Activated naive CD4-positive, alpha-beta T cell treated with anti-CD3 and anti-CD28 coated beads for 36 hours (primary cell): ENCODE measurements at regions of chr9 and their contacts with region 1.

Region 1: DNA sequence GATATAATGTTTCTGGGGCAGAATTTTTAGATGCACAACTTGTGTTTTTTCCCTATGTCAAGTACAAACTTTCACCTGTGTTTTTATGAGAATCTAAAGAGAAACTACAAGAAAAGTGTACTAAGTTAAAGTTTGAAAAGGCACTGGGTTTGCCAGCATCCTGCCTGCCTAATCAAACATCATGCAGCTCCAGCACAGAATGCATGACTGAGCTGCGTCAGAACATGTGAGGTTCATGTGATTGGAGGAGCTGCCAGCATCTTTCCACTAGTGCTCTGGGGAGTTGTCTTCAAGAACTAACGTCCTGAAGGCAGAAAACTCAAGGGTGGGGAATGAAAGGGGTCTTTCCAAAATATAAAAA is 46.1 kb upstream of the RIC1 start:
- DNase-seq: peak; percentile 72
- H3K4me3 Mint-ChIP-seq: peak overlapping the region; percentile 27
- H3K27ac Mint-ChIP-seq: peak overlapping the region; percentile 78
- H3K4me1 Mint-ChIP-seq: peaks cover 66% of the 10 kb centered on the region
- H3K27me3 Mint-ChIP-seq: no peaks in the 10 kb centered on the region

Region 2: GRCh38 chr9:4740638-4741364 is 842.0 kb before region 1 on chr9 and contains the start of gene AK3:
- CTCF ChIA-PET with region 1: no interaction called
- intact Hi-C with region 1: loop called (anchors 10 kb)
- DNase-seq: peak; percentile 90
- H3K4me3 Mint-ChIP-seq: peak within 1 kb of the TSS; percentile 91
- H3K27ac Mint-ChIP-seq: peak within 1 kb of the TSS; percentile 89
- H3K4me1 Mint-ChIP-seq: peaks cover 55% of the 10 kb centered on the region
- H3K27me3 Mint-ChIP-seq: no peaks in the 10 kb centered on the region
- total RNA-seq, gene AK3: 50.2 to 50.9 TPM

Region 3: GRCh38 chr9:4970970-4971641 is 611.7 kb before region 1 on chr9:
- CTCF ChIA-PET with region 1: no interaction called
- intact Hi-C with region 1: loop called (anchors 1 kb)
- DNase-seq: peak; percentile 91
- H3K4me3 Mint-ChIP-seq: no peak overlapping the region
- H3K27ac Mint-ChIP-seq: no peak overlapping the region
- H3K4me1 Mint-ChIP-seq: peaks cover 23% of the 10 kb centered on the region
- H3K27me3 Mint-ChIP-seq: no peaks in the 10 kb centered on the region

Region 4: DNA sequence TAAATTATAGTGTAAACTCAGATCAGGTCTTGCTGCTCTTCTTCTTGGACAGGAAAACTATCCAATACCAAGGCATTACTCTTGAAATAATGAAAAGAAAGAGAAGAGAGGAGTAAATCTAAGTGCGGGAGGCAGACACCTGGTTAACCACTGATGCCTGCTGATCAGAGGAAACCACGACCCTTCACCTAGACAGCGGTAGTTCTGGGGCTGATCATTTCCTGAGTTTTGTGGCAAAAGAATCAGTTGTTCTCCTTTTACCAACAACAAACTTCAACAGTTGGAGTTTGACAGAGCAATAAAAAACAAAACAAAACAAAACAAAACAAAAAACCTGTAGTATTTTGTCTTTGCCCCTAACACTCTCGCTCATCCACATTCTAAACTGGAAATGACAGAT is 246.1 kb before region 1 on chr9:
- CTCF ChIA-PET with region 1: no interaction called
- intact Hi-C with region 1: no loop called
- DNase-seq: peak; percentile 42
- H3K4me3 Mint-ChIP-seq: peak overlapping the region; percentile 57
- H3K27ac Mint-ChIP-seq: no peak overlapping the region
- H3K4me1 Mint-ChIP-seq: peaks cover 39% of the 10 kb centered on the region
- H3K27me3 Mint-ChIP-seq: no peaks in the 10 kb centered on the region

Region 5: DNA sequence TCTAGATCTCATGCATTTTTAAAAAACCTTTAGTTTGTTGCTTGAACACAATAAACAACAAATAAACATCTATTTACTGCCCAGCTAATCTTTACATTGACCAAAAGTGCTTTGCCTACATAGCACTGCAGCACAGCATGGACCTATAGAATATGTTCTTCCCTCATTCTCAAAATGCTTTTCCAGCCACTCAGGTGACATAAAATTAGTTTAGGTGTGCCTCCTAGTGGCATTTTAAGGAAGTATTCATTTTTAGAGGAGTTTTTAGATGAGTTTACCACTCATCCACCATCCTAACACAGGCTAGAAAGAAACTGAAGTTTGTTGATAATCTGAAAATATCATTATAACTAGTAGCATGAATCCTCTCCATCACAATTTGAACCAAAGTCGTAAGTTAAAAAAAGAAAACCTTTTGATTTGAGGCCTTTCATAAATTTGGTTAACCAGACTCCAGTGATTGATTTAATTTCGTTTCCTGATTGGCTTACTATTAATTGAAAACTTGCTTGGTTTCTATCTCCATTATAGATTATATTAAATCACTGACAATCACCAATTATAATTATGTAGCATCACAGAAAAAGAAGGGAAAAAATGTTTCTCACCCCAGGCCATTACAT is 157.7 kb before region 1 on chr9:
- CTCF ChIA-PET with region 1: interaction called, 11 read pairs
- intact Hi-C with region 1: no loop called
- DNase-seq: no peak
- H3K4me3 Mint-ChIP-seq: no peak overlapping the region
- H3K27ac Mint-ChIP-seq: no peak overlapping the region
- H3K4me1 Mint-ChIP-seq: peaks cover 13% of the 10 kb centered on the region
- H3K27me3 Mint-ChIP-seq: no peaks in the 10 kb centered on the region

Region 6: DNA sequence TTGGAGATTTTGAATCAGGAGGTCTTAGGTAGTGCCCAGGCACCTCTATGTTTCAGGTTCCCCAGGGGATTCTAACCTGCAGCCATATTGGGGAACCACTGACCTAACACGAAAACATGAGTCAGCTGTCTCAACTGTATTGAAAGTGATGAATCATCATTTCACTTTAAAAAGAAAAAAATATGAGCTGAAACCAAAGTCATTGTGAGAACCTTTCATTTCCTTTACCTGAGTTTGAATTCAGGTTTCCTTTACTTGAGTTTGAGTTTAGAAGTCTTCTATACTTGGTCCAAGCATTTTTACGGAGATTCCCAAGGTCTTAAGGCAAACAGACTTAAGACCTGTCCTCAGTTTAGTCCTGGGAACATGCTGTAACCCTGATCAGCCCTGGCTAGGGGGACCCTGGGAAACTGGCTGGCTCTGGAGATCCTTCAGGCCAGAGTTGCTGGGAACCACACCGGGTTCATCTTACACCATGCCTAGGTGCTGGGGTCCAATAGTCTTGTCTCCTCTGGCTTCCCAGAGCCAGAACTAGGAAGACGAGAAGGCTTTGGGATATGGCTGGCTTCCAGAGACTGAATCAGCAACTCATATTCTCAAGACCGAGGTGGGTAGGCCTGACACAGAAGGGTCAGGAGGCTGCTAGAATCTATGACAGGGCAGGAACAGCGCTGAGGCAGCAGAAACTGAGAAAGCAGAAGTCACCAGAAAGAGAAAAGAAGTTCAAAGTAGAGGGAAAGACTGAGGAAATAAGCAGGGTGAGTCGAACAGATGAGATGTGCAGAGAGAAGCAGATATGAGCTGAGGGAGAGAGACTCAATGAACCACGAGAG is 88.9 kb before region 1 on chr9:
- CTCF ChIA-PET with region 1: interaction called, 3 read pairs
- intact Hi-C with region 1: loop called (anchors 1 kb)
- DNase-seq: peak; percentile 39
- H3K4me3 Mint-ChIP-seq: no peak overlapping the region
- H3K27ac Mint-ChIP-seq: peak overlapping the region; percentile 48
- H3K4me1 Mint-ChIP-seq: peaks cover 17% of the 10 kb centered on the region
- H3K27me3 Mint-ChIP-seq: no peaks in the 10 kb centered on the region

Region 7: DNA sequence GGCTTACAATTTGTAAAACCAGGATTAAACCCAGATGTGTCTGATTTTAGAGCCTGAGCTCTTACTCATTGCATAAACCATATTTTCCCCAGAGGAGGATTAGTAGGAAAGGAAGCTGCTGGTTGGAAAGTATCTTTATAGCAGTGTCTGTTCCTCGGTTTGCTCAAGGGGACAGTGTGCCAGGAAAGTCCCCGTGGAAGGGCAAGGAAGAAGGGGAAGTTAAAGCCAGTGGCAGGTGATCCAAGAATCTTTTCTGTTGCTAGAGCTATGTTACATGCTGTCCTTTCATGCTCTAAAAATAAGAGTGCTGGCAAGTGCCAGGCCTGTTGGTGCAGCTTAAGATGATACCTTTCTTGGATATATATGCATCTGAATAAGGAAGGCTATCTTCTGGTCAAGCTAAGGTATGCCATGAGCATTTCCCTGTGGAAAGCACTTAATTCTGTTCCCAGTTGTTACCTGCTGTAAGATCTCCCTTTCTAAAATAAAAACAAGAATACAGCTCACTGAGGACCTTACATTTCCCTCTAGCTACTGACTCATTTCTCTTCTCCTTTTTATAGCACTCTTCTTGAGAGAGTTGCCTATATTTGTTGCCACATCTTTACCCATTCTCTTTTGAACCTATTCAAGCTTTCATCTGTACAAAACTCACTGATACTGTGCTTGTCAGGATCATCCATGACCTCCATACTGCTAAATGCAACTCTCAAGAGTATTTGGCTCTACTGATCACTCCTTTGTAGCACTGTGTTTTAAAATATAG is 64.5 kb before region 1 on chr9:
- CTCF ChIA-PET with region 1: no interaction called
- intact Hi-C with region 1: loop called (anchors 1 kb)
- DNase-seq: no peak
- H3K4me3 Mint-ChIP-seq: no peak overlapping the region
- H3K27ac Mint-ChIP-seq: peak overlapping the region; percentile 27
- H3K4me1 Mint-ChIP-seq: peaks cover 23% of the 10 kb centered on the region
- H3K27me3 Mint-ChIP-seq: no peaks in the 10 kb centered on the region

Region 8: DNA sequence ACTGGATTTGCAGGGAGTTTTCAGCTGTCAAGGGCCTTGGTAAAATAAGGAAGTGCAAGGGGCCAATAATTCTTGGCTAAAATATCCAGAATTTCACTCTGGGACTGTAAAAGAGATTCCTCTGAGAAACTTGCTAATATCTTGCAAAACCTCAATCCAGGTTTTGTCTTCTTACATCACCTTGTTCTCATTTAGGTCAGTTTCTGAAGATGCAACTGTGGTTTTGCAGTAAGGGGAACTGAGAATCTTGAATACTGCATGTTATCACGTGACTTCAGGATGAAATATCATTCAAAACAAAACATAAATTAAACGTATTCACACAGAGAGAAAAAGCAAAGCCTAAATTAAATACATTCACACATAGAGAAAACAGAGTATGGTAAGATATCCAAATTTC is 11.1 kb after region 1 on chr9:
- CTCF ChIA-PET with region 1: interaction called, 54 read pairs
- intact Hi-C with region 1: no loop called
- DNase-seq: no peak
- H3K4me3 Mint-ChIP-seq: no peak overlapping the region
- H3K27ac Mint-ChIP-seq: no peak overlapping the region
- H3K4me1 Mint-ChIP-seq: peaks cover 24% of the 10 kb centered on the region
- H3K27me3 Mint-ChIP-seq: no peaks in the 10 kb centered on the region